CD4-positive, alpha-beta T cell (primary cell): ENCODE measurements at regions of chr12 and their contacts with region 1.

Region 1: DNA sequence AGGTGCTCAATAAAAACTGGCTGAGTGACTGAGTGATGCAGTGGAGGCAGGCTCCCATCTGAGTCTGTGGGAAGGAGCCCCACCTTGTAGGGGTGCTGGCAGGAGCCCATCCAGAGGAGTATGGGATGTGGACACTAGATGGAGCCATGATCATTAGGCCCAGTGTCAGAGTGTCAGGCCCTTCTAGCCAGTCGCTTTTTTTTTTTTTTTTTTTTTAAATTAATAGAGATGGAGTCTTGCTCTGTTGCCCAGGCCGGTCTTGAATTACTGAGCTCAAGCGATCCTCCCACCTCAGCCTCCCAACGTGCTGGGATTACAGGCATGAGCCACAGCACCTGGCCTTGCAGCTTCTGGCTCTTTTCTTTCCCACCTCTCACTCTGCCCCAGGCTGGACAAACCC is 11.5 kb downstream of the RITA1 start:
- DNase-seq: peak; percentile 33 to 86 (median 46)
- ATAC-seq: peak; percentile 99
- H3K4me3 ChIP-seq: no peak overlapping the region
- H3K4me3 Mint-ChIP-seq: no peak overlapping the region
- H3K27ac ChIP-seq: no peak overlapping the region
- H3K27ac Mint-ChIP-seq: no peak overlapping the region
- H3K4me1 ChIP-seq: peaks cover 6% of the 10 kb centered on the region
- H3K4me1 Mint-ChIP-seq: no peaks in the 10 kb centered on the region
- H3K27me3 ChIP-seq: no peaks in the 10 kb centered on the region
- H3K27me3 Mint-ChIP-seq: no peaks in the 10 kb centered on the region
- CTCF ChIP-seq: peak; percentile 75

Region 2: GRCh38 chr12:113232840-113233585 is 36.0 kb after region 1 on chr12:
- CTCF ChIA-PET with region 1: interaction called, 7 read pairs
- POLR2A ChIA-PET with region 1: no interaction called
- intact Hi-C with region 1: loop called (anchors 1 to 5 kb)
- DNase-seq: peak; percentile 46 to 90 (median 72)
- ATAC-seq: peak; percentile 96
- H3K4me3 ChIP-seq: peak overlapping the region; percentile 39
- H3K4me3 Mint-ChIP-seq: peak overlapping the region; percentile 93
- H3K27ac ChIP-seq: peak overlapping the region in 1 of 2 donors; percentile 46
- H3K27ac Mint-ChIP-seq: peak overlapping the region; percentile 80
- H3K4me1 ChIP-seq: peaks cover 65% of the 10 kb centered on the region
- H3K4me1 Mint-ChIP-seq: peaks cover 63% of the 10 kb centered on the region
- H3K27me3 ChIP-seq: no peaks in the 10 kb centered on the region
- H3K27me3 Mint-ChIP-seq: no peaks in the 10 kb centered on the region
- CTCF ChIP-seq: peak; percentile 32

Region 3: GRCh38 chr12:113284751-113285150 is 87.8 kb after region 1 on chr12:
- CTCF ChIA-PET with region 1: no interaction called
- POLR2A ChIA-PET with region 1: no interaction called
- intact Hi-C with region 1: loop called in 1 of 2 experiments (anchors 5 kb)
- DNase-seq: no peak
- ATAC-seq: no peak
- H3K4me3 ChIP-seq: no peak overlapping the region
- H3K4me3 Mint-ChIP-seq: no peak overlapping the region
- H3K27ac ChIP-seq: no peak overlapping the region
- H3K27ac Mint-ChIP-seq: no peak overlapping the region
- H3K4me1 ChIP-seq: no peaks in the 10 kb centered on the region
- H3K4me1 Mint-ChIP-seq: no peaks in the 10 kb centered on the region
- H3K27me3 ChIP-seq: no peaks in the 10 kb centered on the region
- H3K27me3 Mint-ChIP-seq: no peaks in the 10 kb centered on the region
- CTCF ChIP-seq: no peak

Region 4: GRCh38 chr12:113310489-113310888 is 113.5 kb after region 1 on chr12:
- CTCF ChIA-PET with region 1: interaction called, 5 read pairs
- POLR2A ChIA-PET with region 1: no interaction called
- intact Hi-C with region 1: loop called in 1 of 2 experiments (anchors 2 kb)
- DNase-seq: peak in 1 of 14 experiments; percentile 6
- ATAC-seq: no peak
- H3K4me3 ChIP-seq: no peak overlapping the region
- H3K4me3 Mint-ChIP-seq: no peak overlapping the region
- H3K27ac ChIP-seq: no peak overlapping the region
- H3K27ac Mint-ChIP-seq: no peak overlapping the region
- H3K4me1 ChIP-seq: no peaks in the 10 kb centered on the region
- H3K4me1 Mint-ChIP-seq: no peaks in the 10 kb centered on the region
- H3K27me3 ChIP-seq: no peaks in the 10 kb centered on the region
- H3K27me3 Mint-ChIP-seq: no peaks in the 10 kb centered on the region
- CTCF ChIP-seq: no peak

Region 5: GRCh38 chr12:113422030-113422885 is 225.3 kb after region 1 on chr12 and contains the start of gene SDSL:
- CTCF ChIA-PET with region 1: no interaction called
- POLR2A ChIA-PET with region 1: no interaction called
- intact Hi-C with region 1: loop called (anchors 1 to 10 kb)
- DNase-seq: peak in 3 of 14 experiments; percentile 25 to 76 (median 67)
- ATAC-seq: peak; percentile 66
- H3K4me3 ChIP-seq: peak within 1 kb of the TSS; percentile 3
- H3K4me3 Mint-ChIP-seq: peak within 1 kb of the TSS; percentile 87
- H3K27ac ChIP-seq: no peak within 1 kb of the TSS
- H3K27ac Mint-ChIP-seq: peak within 1 kb of the TSS; percentile 77
- H3K4me1 ChIP-seq: peaks cover 3% of the 10 kb centered on the region
- H3K4me1 Mint-ChIP-seq: peaks cover 14% of the 10 kb centered on the region
- H3K27me3 ChIP-seq: no peaks in the 10 kb centered on the region
- H3K27me3 Mint-ChIP-seq: no peaks in the 10 kb centered on the region
- CTCF ChIP-seq: no peak
- total RNA-seq, gene SDSL: 0.47 to 0.50 TPM

Region 6: GRCh38 chr12:113912760-113913329 is 715.8 kb after region 1 on chr12:
- CTCF ChIA-PET with region 1: no interaction called
- POLR2A ChIA-PET with region 1: no interaction called
- intact Hi-C with region 1: loop called in 1 of 2 experiments (anchors 5 kb)
- DNase-seq: peak in 13 of 14 experiments; percentile 13 to 63 (median 29)
- ATAC-seq: no peak
- H3K4me3 ChIP-seq: no peak overlapping the region
- H3K4me3 Mint-ChIP-seq: no peak overlapping the region
- H3K27ac ChIP-seq: no peak overlapping the region
- H3K27ac Mint-ChIP-seq: no peak overlapping the region
- H3K4me1 ChIP-seq: no peaks in the 10 kb centered on the region
- H3K4me1 Mint-ChIP-seq: no peaks in the 10 kb centered on the region
- H3K27me3 ChIP-seq: no peaks in the 10 kb centered on the region
- H3K27me3 Mint-ChIP-seq: no peaks in the 10 kb centered on the region
- CTCF ChIP-seq: peak; percentile 69

Region 7: GRCh38 chr12:114245555-114245954 is 1048.6 kb after region 1 on chr12:
- CTCF ChIA-PET with region 1: no interaction called
- POLR2A ChIA-PET with region 1: no interaction called
- intact Hi-C with region 1: no loop called
- DNase-seq: no peak
- ATAC-seq: no peak
- H3K4me3 ChIP-seq: no peak overlapping the region
- H3K4me3 Mint-ChIP-seq: no peak overlapping the region
- H3K27ac ChIP-seq: no peak overlapping the region
- H3K27ac Mint-ChIP-seq: no peak overlapping the region
- H3K4me1 ChIP-seq: no peaks in the 10 kb centered on the region
- H3K4me1 Mint-ChIP-seq: no peaks in the 10 kb centered on the region
- H3K27me3 ChIP-seq: peaks cover 4 to 6% of the 10 kb centered on the region in 2 experiments
- H3K27me3 Mint-ChIP-seq: peaks cover 15% of the 10 kb centered on the region
- CTCF ChIP-seq: no peak